ENCODE measurements at regions of chr5 and their contacts with region 1.

Region 1: GRCh38 chr5:175746851-175747250 is 89.0 kb downstream of the HRH2 start:
- DNase-seq: peak in 24 of 42 donors; percentile 26 to 66 (median 41)

Region 2: GRCh38 chr5:175789670-175790069 is 42.8 kb after region 1 on chr5:
- intact Hi-C with region 1: no loop called
- DNase-seq: no peak

Region 3: DNA sequence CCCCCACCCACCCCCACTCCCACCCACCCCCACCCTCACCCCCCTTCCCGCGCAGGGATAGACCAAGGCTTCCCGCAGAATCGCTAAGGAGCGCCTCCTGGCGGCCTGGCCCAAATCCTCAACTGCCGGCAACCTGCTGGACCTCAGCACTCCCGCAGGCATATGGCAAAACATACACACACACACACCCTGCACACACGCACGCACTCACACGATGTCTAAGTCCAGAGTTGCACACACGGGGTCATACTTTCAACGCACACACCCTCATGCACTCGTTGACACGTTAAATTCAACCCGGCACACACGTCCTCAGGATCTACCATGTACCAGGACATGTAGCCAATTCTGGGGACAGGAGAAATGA is 126.2 kb after region 1 on chr5:
- intact Hi-C with region 1: loop called (anchors 10 kb)
- DNase-seq: peak; percentile 20 to 84 (median 67)